ENCODE measurements at regions of chr16 and their contacts with region 1.

Region 1: GRCh38 chr16:49350265-49351095 is 23.1 kb upstream of the C16orf78 start:
- DNase-seq: peak; percentile 75
- ATAC-seq: no peak
- H3K4me3 Mint-ChIP-seq: no peak overlapping the region
- H3K27ac Mint-ChIP-seq: no peak overlapping the region
- H3K4me1 Mint-ChIP-seq: no peaks in the 10 kb centered on the region
- H3K27me3 Mint-ChIP-seq: peaks cover 17% of the 10 kb centered on the region

Region 2: DNA sequence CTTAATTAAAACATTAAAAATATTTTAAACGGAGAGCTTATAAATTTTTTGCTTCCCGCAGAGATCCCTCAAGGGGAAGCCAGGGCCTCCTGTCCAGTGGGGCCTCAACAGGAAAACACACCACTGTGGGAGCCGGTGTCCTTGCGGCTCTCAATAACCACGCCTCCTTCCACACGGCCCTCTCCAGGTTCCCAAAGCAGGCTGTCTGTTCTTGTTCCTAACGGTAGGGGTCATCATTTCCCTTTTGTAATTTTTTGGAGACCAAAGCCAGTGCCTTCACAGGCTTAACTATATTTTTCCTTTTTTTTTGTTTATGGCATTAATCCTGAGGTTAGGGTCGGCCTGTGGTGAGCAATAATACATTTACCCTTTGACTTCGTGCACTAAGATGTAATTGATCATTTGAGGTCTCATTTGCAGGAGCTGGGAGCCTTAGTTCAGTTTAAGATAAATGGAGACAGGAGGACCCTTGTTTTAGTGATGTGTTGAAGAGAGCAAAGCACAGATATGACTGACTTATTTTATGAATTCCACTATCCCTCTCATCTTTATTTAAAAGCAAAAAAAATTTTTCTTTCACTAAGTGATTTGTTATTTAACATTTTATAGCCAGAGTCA is 663.0 kb before region 1 on chr16:
- CTCF ChIA-PET with region 1: interaction called, 5 read pairs
- POLR2A ChIA-PET with region 1: no interaction called
- intact Hi-C with region 1: loop called (anchors 1 to 2 kb)
- DNase-seq: peak; percentile 63
- ATAC-seq: peak; percentile 80
- H3K4me3 Mint-ChIP-seq: no peak overlapping the region
- H3K27ac Mint-ChIP-seq: no peak overlapping the region
- H3K4me1 Mint-ChIP-seq: peaks cover 2% of the 10 kb centered on the region
- H3K27me3 Mint-ChIP-seq: peaks cover 20% of the 10 kb centered on the region

Region 3: DNA sequence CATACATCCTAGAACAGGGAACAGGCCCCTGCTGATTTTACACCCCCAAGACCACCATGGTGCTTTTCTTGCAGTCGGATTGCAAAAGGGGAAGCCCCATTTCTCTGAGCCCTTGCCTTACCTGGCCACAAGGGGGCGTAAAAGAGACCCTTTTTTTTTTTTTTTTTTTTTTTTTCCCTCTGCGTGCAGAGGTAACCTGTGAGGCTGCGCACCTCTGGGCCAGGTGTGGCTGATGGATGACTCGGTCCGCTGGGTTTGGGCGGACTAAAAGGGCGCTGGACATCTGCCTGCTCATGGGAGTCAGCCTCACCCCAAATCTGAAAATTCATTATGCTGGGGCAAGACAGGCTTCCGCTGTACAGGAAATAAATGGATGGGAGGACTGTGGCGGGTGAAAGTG is 349.9 kb before region 1 on chr16:
- CTCF ChIA-PET with region 1: no interaction called
- POLR2A ChIA-PET with region 1: no interaction called
- intact Hi-C with region 1: loop called in 1 of 2 experiments (anchors 2 kb)
- DNase-seq: no peak
- ATAC-seq: no peak
- H3K4me3 Mint-ChIP-seq: no peak overlapping the region
- H3K27ac Mint-ChIP-seq: no peak overlapping the region
- H3K4me1 Mint-ChIP-seq: no peaks in the 10 kb centered on the region
- H3K27me3 Mint-ChIP-seq: peaks cover 3% of the 10 kb centered on the region

Measured in activated CD4-positive, alpha-beta T cell treated with anti-CD3 and anti-CD28 coated beads for 36 hours (primary cell).